ENCODE measurements at regions of chr14 and their contacts with region 1.

Region 1: GRCh38 chr14:73295198-73295796 is 58.0 kb downstream of the PAPLN start:
- DNase-seq: no peak
- ATAC-seq: no peak
- H3K4me3 Mint-ChIP-seq: no peak overlapping the region
- H3K27ac Mint-ChIP-seq: no peak overlapping the region
- H3K4me1 Mint-ChIP-seq: peaks cover 11% of the 10 kb centered on the region
- H3K27me3 Mint-ChIP-seq: no peaks in the 10 kb centered on the region
- CTCF ChIP-seq: peak; percentile 49

Region 2: DNA sequence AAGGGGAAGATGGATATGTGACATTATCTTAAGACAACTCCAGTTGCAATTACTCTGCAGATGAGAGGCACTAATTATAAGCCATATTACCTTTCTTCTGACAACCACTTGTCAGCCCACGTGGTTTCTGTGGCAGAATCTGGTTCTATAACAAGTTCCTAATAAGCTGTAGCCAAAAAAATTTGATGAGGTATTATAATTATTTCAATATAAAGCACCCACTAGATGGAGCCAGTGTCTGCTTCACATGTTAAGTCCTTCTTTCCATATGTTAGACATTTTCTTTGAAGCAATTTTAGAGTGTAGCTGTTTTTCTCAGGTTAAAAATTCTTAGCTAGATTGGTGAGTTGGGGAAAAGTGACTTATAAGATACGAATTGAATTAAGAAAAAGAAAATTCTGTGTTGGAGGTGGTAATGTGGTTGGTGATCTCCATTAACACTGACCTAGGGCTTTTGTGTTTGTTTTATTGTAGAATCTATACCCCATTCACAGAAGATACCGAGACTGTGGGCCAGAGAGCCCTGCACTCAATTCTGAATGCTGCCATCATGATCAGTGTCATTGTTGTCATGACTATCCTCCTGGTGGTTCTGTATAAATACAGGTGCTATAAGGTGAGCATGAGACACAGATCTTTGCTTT is 122.1 kb before region 1 on chr14:
- CTCF ChIA-PET with region 1: interaction called, 11 read pairs
- POLR2A ChIA-PET with region 1: no interaction called
- DNase-seq: no peak
- ATAC-seq: no peak
- H3K4me3 Mint-ChIP-seq: no peak overlapping the region
- H3K27ac Mint-ChIP-seq: no peak overlapping the region
- H3K4me1 Mint-ChIP-seq: peaks cover 21% of the 10 kb centered on the region
- H3K27me3 Mint-ChIP-seq: peaks cover 3% of the 10 kb centered on the region; the same call in 1 of the 2 replicates
- CTCF ChIP-seq: no peak

Region 3: GRCh38 chr14:73283608-73284379 is 11.5 kb before region 1 on chr14:
- CTCF ChIA-PET with region 1: interaction called, 23 read pairs
- POLR2A ChIA-PET with region 1: no interaction called
- DNase-seq: peak; percentile 45
- ATAC-seq: peak; percentile 75
- H3K4me3 Mint-ChIP-seq: peak overlapping the region; percentile 12; the same call in 1 of the 2 replicates
- H3K27ac Mint-ChIP-seq: peak overlapping the region; percentile 76
- H3K4me1 Mint-ChIP-seq: peaks cover 44% of the 10 kb centered on the region
- H3K27me3 Mint-ChIP-seq: peaks cover 18% of the 10 kb centered on the region
- CTCF ChIP-seq: no peak

Region 4: GRCh38 chr14:73311708-73312030 is 16.4 kb after region 1 on chr14:
- CTCF ChIA-PET with region 1: interaction called, 22 read pairs
- POLR2A ChIA-PET with region 1: no interaction called
- DNase-seq: no peak
- ATAC-seq: no peak
- H3K4me3 Mint-ChIP-seq: no peak overlapping the region
- H3K27ac Mint-ChIP-seq: no peak overlapping the region
- H3K4me1 Mint-ChIP-seq: peaks cover 5% of the 10 kb centered on the region
- H3K27me3 Mint-ChIP-seq: no peaks in the 10 kb centered on the region
- CTCF ChIP-seq: no peak

Region 5: GRCh38 chr14:73358187-73358586 is 62.9 kb after region 1 on chr14:
- CTCF ChIA-PET with region 1: interaction called, 10 read pairs
- POLR2A ChIA-PET with region 1: interaction called, 4 read pairs
- DNase-seq: no peak
- ATAC-seq: peak; percentile 81
- H3K4me3 Mint-ChIP-seq: no peak overlapping the region
- H3K27ac Mint-ChIP-seq: 0 out of 2 replicates have a peak overlapping the region, but pooled peaks have one; percentile 17
- H3K4me1 Mint-ChIP-seq: peaks cover 15% of the 10 kb centered on the region
- H3K27me3 Mint-ChIP-seq: no peaks in the 10 kb centered on the region; the same call in 1 of the 2 replicates
- CTCF ChIP-seq: no peak

Region 6: DNA sequence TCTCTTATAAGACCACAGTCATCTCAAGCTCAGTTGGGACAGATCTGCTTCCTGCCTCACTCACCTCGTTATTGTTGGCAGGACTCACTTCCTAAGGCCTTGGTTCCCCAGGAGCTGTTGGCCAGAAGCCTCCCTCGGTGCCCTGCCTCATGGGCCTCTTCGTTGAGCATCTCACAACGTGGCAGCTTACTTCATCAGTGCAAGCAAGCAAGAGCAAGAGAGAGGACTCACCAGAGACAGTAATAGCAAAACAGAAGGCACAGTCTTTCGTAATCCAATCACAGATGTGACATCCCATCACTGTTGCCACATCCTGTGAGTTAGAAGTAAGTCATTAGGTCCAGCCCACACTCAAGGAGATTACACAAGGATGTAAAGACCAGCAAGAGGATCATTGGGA is 168.1 kb after region 1 on chr14:
- CTCF ChIA-PET with region 1: interaction called, 26 read pairs
- POLR2A ChIA-PET with region 1: no interaction called
- DNase-seq: no peak
- ATAC-seq: no peak
- H3K4me3 Mint-ChIP-seq: no peak overlapping the region
- H3K27ac Mint-ChIP-seq: no peak overlapping the region
- H3K4me1 Mint-ChIP-seq: peaks cover 28% of the 10 kb centered on the region
- H3K27me3 Mint-ChIP-seq: no peaks in the 10 kb centered on the region; the same call in 1 of the 2 replicates
- CTCF ChIP-seq: no peak

Region 7: GRCh38 chr14:73521229-73521628 is 225.9 kb after region 1 on chr14:
- CTCF ChIA-PET with region 1: interaction called, 10 read pairs
- POLR2A ChIA-PET with region 1: no interaction called
- DNase-seq: no peak
- ATAC-seq: no peak
- H3K4me3 Mint-ChIP-seq: no peak overlapping the region
- H3K27ac Mint-ChIP-seq: no peak overlapping the region
- H3K4me1 Mint-ChIP-seq: peaks cover 15% of the 10 kb centered on the region
- H3K27me3 Mint-ChIP-seq: no peaks in the 10 kb centered on the region; the same call in 1 of the 2 replicates
- CTCF ChIP-seq: no peak